Motor neuron (in vitro differentiated cells): ENCODE measurements at regions of chr1 and their contacts with region 1.

Region 1: DNA sequence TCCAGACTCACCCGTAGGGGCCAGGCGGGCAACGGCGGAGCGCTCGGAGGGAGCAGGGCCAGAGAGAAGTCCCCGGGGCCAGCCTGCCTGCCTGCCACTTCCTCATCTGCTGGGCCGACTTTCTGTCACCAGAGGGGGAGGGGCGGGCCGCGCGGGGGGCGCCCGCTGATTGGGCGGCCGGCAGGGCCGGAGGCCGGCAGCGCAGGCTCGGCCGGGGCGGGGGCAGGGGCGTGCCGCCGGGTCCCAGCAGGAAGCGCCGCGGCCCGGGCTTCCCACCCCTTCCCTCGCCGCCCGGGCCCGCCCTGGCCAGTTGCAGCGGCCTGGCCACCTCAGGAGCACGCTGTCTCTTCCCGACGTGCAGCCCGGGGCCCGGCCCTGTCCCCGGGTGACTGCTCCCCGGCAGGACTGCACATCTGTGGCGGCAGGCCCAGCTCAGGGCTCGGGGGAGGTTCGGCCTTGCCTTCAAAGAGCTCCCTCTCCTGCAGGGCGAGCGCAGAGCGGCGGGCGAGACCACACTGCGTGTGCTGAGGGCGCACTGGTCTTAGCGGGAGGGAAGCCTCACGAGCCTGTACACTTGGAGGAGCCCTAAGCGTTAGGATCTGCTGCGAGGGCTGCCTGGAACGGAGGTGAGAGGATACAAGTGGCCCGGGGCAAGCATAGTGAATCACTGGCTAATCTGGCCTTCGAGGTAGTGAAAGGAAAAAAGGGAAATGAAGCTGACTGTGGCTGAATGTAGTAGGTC is at the start of gene ELOVL1:
- ATAC-seq: peak; percentile 87 to 94 (median 90)
- H3K4me3 ChIP-seq: peak within 1 kb of the TSS; percentile 39 to 57 (median 47)
- H3K27ac ChIP-seq: peak within 1 kb of the TSS; percentile 72 to 73
- H3K4me1 ChIP-seq: peaks cover 17 to 20% of the 10 kb centered on the region in 2 donors
- total RNA-seq, gene ELOVL1: 11.1 to 83.1 (median 24.5) TPM

Region 2: DNA sequence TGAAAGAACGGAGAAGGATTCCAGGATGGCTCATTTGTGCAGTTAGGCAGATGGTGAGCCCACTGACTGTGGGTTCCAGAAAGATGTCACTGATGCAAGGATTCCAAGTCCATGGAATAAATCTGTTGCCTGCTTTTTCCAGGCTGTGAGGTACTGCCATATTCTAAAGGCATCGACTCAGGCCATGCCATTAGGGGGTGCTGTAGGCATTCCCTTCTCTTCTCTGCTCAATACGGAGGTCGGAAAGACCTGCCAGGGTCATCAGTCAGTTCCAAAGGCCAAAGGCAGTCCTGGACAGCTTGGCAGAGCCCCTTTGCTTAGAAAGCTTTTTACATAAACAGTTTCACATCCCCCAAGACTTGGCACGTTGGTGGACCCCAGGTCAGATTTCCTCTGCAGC is 130.0 kb before region 1 on chr1:
- in situ Hi-C with region 1: loop called in 1 of 9 experiments (anchors 10 kb)
- ATAC-seq: peak; percentile 68 to 90 (median 88)
- H3K4me3 ChIP-seq: no peak overlapping the region
- H3K27ac ChIP-seq: no peak overlapping the region
- H3K4me1 ChIP-seq: no peaks in the 10 kb centered on the region

Region 3: GRCh38 chr1:43565600-43566360 is 197.7 kb after region 1 on chr1:
- in situ Hi-C with region 1: no loop called
- ATAC-seq: peak; percentile 88 to 97 (median 91)
- H3K4me3 ChIP-seq: peak overlapping the region in 4 of 5 donors; percentile 14 to 31 (median 17)
- H3K27ac ChIP-seq: peak overlapping the region; percentile 50 to 54
- H3K4me1 ChIP-seq: peaks cover 51 to 55% of the 10 kb centered on the region in 2 donors